Vagina (tissue), 2 donors: ENCODE measurements at regions of chr2 and their contacts with region 1.

Region 1: GRCh38 chr2:219824996-219825395 is 197.6 kb downstream of the SLC4A3 start:
- DNase-seq: no peak
- H3K4me3 ChIP-seq: no peak overlapping the region
- H3K27ac ChIP-seq: no peak overlapping the region
- H3K4me1 ChIP-seq: no peaks in the 10 kb centered on the region
- H3K27me3 ChIP-seq: no peaks in the 10 kb centered on the region
- CTCF ChIP-seq: no peak
- POLR2A ChIP-seq: no peak

Region 2: GRCh38 chr2:219769090-219769910 is 55.7 kb before region 1 on chr2:
- intact Hi-C with region 1: no loop called
- DNase-seq: no peak
- H3K4me3 ChIP-seq: no peak overlapping the region
- H3K27ac ChIP-seq: no peak overlapping the region
- H3K4me1 ChIP-seq: no peaks in the 10 kb centered on the region
- H3K27me3 ChIP-seq: no peaks in the 10 kb centered on the region
- CTCF ChIP-seq: no peak
- POLR2A ChIP-seq: no peak

Region 3: DNA sequence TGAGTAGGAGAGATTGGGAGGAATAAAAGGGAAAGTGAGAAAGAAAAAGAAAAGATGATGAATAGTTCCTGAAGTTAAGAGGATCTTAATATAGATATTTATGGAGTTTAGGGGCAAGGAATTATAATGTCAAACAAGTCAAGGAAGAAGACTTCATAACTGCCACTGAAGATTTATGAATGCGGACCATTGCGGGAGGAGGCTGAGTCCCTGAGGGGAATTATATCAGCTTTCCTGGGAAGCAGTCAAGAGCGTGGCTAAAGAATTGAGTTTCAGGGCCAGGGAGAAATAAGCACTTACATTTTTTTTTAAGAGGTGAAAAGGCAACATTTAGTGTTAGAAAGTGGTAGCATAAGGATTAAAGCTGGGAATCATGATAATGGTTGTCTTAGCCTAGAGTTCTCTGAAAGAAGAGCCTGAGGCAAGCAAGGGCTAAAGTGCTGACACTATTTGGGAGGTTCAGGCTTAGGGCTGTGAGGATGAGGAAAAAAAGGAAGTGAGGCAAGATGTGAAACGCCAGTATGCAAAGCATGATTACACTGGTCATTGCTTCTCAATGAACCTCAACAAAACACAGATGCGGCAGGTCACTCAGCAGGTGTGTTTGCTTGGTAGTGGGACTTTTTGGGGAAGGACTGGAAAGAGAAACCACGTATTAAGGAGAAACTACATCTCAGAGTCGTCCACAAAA is 19.6 kb after region 1 on chr2:
- intact Hi-C with region 1: loop called (anchors 1 kb)
- DNase-seq: no peak
- H3K4me3 ChIP-seq: no peak overlapping the region
- H3K27ac ChIP-seq: no peak overlapping the region
- H3K4me1 ChIP-seq: no peaks in the 10 kb centered on the region
- H3K27me3 ChIP-seq: no peaks in the 10 kb centered on the region
- CTCF ChIP-seq: no peak
- POLR2A ChIP-seq: no peak

Region 4: DNA sequence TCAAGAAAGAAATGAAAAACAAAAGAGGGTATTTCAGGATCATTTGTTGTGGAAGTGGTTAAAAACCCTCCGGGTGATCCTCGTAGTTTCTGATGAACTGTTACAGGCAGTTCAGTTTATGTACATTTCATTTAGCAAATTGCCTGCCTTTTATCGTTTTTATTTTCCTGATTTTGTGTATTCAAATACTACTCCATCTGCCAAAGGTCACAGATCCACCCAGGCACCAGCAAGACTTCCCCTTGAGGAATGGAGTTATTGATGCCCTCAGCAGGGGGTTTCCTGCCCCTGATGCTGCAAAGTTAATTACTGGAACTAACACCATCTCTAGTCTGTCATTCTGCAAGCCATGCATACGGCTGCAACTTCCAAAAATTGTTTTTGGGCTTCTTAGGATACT is 444.4 kb after region 1 on chr2:
- intact Hi-C with region 1: no loop called
- DNase-seq: no peak
- H3K4me3 ChIP-seq: no peak overlapping the region
- H3K27ac ChIP-seq: no peak overlapping the region
- H3K4me1 ChIP-seq: no peaks in the 10 kb centered on the region
- H3K27me3 ChIP-seq: no peaks in the 10 kb centered on the region
- CTCF ChIP-seq: no peak
- POLR2A ChIP-seq: no peak